Activated B cell treated with CpG ODN at 0.5 μM for 24 hours (primary cell): ENCODE measurements at regions of chr5 and their contacts with region 1.

Region 1: GRCh38 chr5:134738133-134738962 is at the start of gene CAMLG:
- DNase-seq: peak; percentile 94
- ATAC-seq: peak; percentile 97
- H3K4me3 Mint-ChIP-seq: peak within 1 kb of the TSS; percentile 86
- H3K27ac Mint-ChIP-seq: peak within 1 kb of the TSS; percentile 93
- H3K4me1 Mint-ChIP-seq: peaks cover 33% of the 10 kb centered on the region
- H3K27me3 Mint-ChIP-seq: no peaks in the 10 kb centered on the region
- CTCF ChIP-seq: no peak
- total RNA-seq, gene CAMLG: 22.2 and 23.9 TPM in 2 replicates

Region 2: GRCh38 chr5:134004592-134005375 is 733.6 kb before region 1 on chr5 and contains the start of gene VDAC1:
- CTCF ChIA-PET with region 1: no interaction called
- POLR2A ChIA-PET with region 1: no interaction called
- intact Hi-C with region 1: loop called (anchors 10 kb)
- DNase-seq: peak; percentile 81
- ATAC-seq: peak; percentile 82
- H3K4me3 Mint-ChIP-seq: peak within 1 kb of the TSS; percentile 92
- H3K27ac Mint-ChIP-seq: peak within 1 kb of the TSS; percentile 93
- H3K4me1 Mint-ChIP-seq: peaks cover 38% of the 10 kb centered on the region
- H3K27me3 Mint-ChIP-seq: no peaks in the 10 kb centered on the region
- CTCF ChIP-seq: no peak
- total RNA-seq, gene VDAC1: 158 and 164 TPM in 2 replicates

Region 3: GRCh38 chr5:134304311-134304710 is 434.0 kb before region 1 on chr5:
- CTCF ChIA-PET with region 1: interaction called, 3 read pairs
- POLR2A ChIA-PET with region 1: no interaction called
- intact Hi-C with region 1: loop called (anchors 10 kb)
- DNase-seq: no peak
- ATAC-seq: no peak
- H3K4me3 Mint-ChIP-seq: no peak overlapping the region
- H3K27ac Mint-ChIP-seq: no peak overlapping the region
- H3K4me1 Mint-ChIP-seq: no peaks in the 10 kb centered on the region
- H3K27me3 Mint-ChIP-seq: no peaks in the 10 kb centered on the region
- CTCF ChIP-seq: no peak

Region 4: GRCh38 chr5:134637161-134637582 is 101.2 kb before region 1 on chr5:
- CTCF ChIA-PET with region 1: no interaction called
- POLR2A ChIA-PET with region 1: no interaction called
- intact Hi-C with region 1: loop called (anchors 1 kb)
- DNase-seq: no peak
- ATAC-seq: no peak
- H3K4me3 Mint-ChIP-seq: no peak overlapping the region
- H3K27ac Mint-ChIP-seq: no peak overlapping the region
- H3K4me1 Mint-ChIP-seq: peaks cover 2% of the 10 kb centered on the region
- H3K27me3 Mint-ChIP-seq: no peaks in the 10 kb centered on the region
- CTCF ChIP-seq: no peak

Region 5: DNA sequence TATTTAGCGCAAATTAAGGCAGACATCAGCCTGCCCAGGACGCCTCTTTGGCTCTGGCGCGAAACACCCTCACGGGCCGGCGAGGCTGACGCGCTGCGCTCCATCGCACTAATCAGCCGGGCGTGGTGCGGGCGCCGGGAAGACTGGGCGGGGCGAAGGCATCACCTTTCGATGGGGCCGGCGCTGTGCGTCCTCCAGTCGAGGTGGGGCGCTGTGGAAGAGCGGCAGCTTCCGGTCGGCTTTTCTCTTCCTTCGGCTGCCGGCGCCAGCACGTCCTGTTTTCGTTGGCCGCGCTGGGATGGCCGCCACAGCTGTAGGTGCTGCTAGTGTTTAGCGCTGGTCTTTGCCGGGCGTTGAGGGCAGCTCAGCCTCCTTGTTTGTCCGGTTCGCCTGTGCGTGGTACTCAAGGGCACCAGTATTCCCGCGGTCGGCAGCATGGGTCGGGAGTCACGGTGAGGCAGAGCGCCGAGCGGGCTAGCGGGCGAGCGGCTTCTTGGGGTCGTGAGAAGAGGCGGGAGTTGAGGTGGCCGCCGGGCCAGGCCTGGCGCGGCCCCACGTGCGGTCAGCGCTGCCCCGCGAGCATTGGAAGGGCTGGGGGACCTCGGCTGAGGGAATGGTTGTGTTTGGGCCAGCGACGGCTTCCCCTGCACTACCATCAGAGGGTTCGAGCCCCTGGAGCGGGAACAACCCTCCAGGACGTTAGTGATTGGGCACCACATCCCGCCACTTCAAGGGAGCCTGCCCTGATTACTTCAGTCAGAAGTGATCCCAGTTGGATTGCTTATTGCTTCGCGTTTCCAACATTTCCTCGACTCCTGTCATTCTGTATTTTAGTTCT is 20.4 kb after region 1 on chr5 and contains the start of gene DDX46:
- CTCF ChIA-PET with region 1: interaction called, 7 read pairs
- POLR2A ChIA-PET with region 1: interaction called, 35 read pairs
- intact Hi-C with region 1: loop called (anchors 1 kb)
- DNase-seq: peak; percentile 95
- ATAC-seq: peak; percentile 99
- H3K4me3 Mint-ChIP-seq: peak within 1 kb of the TSS; percentile 100
- H3K27ac Mint-ChIP-seq: peak within 1 kb of the TSS; percentile 94
- H3K4me1 Mint-ChIP-seq: peaks cover 36% of the 10 kb centered on the region
- H3K27me3 Mint-ChIP-seq: no peaks in the 10 kb centered on the region
- CTCF ChIP-seq: no peak
- total RNA-seq, gene DDX46: 68.8 and 74.1 TPM in 2 replicates

Region 6: DNA sequence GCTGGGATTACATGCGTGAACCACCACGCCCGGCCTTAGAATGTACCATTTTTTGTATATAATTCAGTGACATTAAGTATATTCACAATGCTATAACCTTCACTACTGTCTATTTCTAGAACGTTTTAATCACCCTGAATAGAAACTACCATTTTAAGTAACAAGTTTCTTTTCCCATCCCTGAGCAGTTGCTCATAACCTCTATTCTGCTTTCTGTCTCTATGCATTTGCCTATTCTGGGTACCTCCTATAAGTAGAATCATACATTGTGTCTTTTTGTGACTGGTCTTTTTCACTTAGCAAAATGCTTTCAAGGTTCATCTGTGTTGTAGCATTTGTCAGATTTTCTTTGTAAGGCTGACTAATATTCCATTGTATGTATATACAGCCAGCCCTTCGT is 60.1 kb after region 1 on chr5:
- CTCF ChIA-PET with region 1: no interaction called
- POLR2A ChIA-PET with region 1: no interaction called
- intact Hi-C with region 1: no loop called
- DNase-seq: no peak
- ATAC-seq: no peak
- H3K4me3 Mint-ChIP-seq: no peak overlapping the region
- H3K27ac Mint-ChIP-seq: no peak overlapping the region
- H3K4me1 Mint-ChIP-seq: no peaks in the 10 kb centered on the region
- H3K27me3 Mint-ChIP-seq: no peaks in the 10 kb centered on the region
- CTCF ChIP-seq: no peak

Region 7: GRCh38 chr5:134873987-134874830 is 135.9 kb after region 1 on chr5 and contains the start of gene TXNDC15:
- CTCF ChIA-PET with region 1: no interaction called
- POLR2A ChIA-PET with region 1: interaction called, 8 read pairs
- intact Hi-C with region 1: loop called (anchors 1 kb)
- DNase-seq: peak; percentile 78
- ATAC-seq: peak; percentile 93
- H3K4me3 Mint-ChIP-seq: peak within 1 kb of the TSS; percentile 95
- H3K27ac Mint-ChIP-seq: peak within 1 kb of the TSS; percentile 94
- H3K4me1 Mint-ChIP-seq: peaks cover 34% of the 10 kb centered on the region
- H3K27me3 Mint-ChIP-seq: no peaks in the 10 kb centered on the region
- CTCF ChIP-seq: no peak
- total RNA-seq, gene TXNDC15: 26.6 and 30.7 TPM in 2 replicates